ENCODE measurements at regions of chr22 and their contacts with region 1.

Region 1: GRCh38 chr22:46762238-46763050 is at the start of gene TBC1D22A:
- DNase-seq: peak; percentile 91
- H3K4me3 Mint-ChIP-seq: peak within 1 kb of the TSS; percentile 97
- H3K27ac Mint-ChIP-seq: peak within 1 kb of the TSS; percentile 98
- H3K4me1 Mint-ChIP-seq: peaks cover 59% of the 10 kb centered on the region
- H3K27me3 Mint-ChIP-seq: no peaks in the 10 kb centered on the region
- total RNA-seq, gene TBC1D22A: 42.4 and 48.1 TPM in 2 replicates

Region 2: GRCh38 chr22:46693634-46694415 is 68.6 kb before region 1 on chr22:
- intact Hi-C with region 1: no loop called
- DNase-seq: no peak
- H3K4me3 Mint-ChIP-seq: no peak overlapping the region
- H3K27ac Mint-ChIP-seq: no peak overlapping the region
- H3K4me1 Mint-ChIP-seq: no peaks in the 10 kb centered on the region
- H3K27me3 Mint-ChIP-seq: no peaks in the 10 kb centered on the region

Region 3: GRCh38 chr22:46737976-46738646 is 24.3 kb before region 1 on chr22 and contains the start of gene CERK:
- intact Hi-C with region 1: loop called (anchors 1 kb)
- DNase-seq: peak; percentile 68
- H3K4me3 Mint-ChIP-seq: peak within 1 kb of the TSS; percentile 99
- H3K27ac Mint-ChIP-seq: peak within 1 kb of the TSS; percentile 97
- H3K4me1 Mint-ChIP-seq: peaks cover 46% of the 10 kb centered on the region
- H3K27me3 Mint-ChIP-seq: no peaks in the 10 kb centered on the region
- total RNA-seq, gene CERK: 69.6 and 76.5 TPM in 2 replicates

Region 4: GRCh38 chr22:46774253-46774979 is 12.0 kb after region 1 on chr22:
- intact Hi-C with region 1: loop called (anchors 1 kb)
- DNase-seq: no peak
- H3K4me3 Mint-ChIP-seq: peak overlapping the region; percentile 78
- H3K27ac Mint-ChIP-seq: peak overlapping the region; percentile 86
- H3K4me1 Mint-ChIP-seq: peaks cover 70% of the 10 kb centered on the region
- H3K27me3 Mint-ChIP-seq: no peaks in the 10 kb centered on the region

Region 5: DNA sequence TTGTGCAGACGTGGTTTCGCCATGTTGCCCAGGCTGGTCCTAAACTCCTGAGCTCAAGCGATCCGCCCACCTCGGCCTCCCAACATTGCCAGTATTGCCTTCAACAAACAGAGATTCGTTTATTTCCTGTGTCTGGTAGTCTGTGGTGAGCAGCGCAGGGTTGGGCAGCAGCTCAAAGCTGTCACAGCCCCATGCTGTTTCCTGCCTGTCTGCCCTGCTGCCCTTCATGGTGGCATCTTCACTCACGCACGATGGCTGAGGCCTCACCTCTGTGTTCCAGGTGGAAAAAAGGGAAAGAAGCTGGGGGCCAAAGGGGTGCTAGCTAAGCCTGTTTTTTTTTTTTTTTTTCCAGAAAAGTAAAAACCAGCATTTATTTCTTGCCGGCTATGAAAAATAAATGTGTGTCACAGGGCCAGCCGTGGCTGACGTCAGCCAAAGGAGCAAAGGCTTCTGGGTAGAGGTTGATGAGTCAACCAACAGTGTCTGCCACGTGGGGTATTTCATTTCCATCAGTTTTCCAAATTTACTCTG is 28.8 kb after region 1 on chr22:
- intact Hi-C with region 1: loop called (anchors 1 kb)
- DNase-seq: peak; percentile 71
- H3K4me3 Mint-ChIP-seq: peak overlapping the region; percentile 78
- H3K27ac Mint-ChIP-seq: peak overlapping the region; percentile 99
- H3K4me1 Mint-ChIP-seq: peaks cover 49% of the 10 kb centered on the region
- H3K27me3 Mint-ChIP-seq: no peaks in the 10 kb centered on the region

Region 6: GRCh38 chr22:46798366-46799350 is 36.2 kb after region 1 on chr22:
- intact Hi-C with region 1: loop called (anchors 1 kb)
- DNase-seq: peak; percentile 65
- H3K4me3 Mint-ChIP-seq: no peak overlapping the region
- H3K27ac Mint-ChIP-seq: peak overlapping the region; percentile 82
- H3K4me1 Mint-ChIP-seq: peaks cover 21% of the 10 kb centered on the region
- H3K27me3 Mint-ChIP-seq: no peaks in the 10 kb centered on the region

Region 7: DNA sequence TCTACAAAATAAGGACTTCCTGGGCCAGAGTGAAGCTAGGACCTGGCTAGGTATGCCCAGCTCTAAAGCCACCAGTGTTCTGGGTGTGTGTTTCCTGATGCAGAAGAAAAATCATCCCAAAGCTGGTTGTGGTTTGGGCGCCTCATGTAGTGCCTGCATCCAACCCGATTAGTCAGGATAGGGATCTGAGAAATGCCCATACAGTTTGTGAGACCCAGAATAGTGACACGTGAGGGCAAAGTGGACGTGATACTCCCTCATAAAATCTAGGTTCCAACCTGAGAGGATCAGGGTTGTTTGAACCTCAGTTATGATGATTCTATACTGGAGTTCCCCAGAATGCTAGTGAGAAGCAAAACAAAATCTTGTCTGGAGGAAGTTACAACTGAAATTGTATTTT is 238.4 kb after region 1 on chr22:
- intact Hi-C with region 1: loop called (anchors 2 kb)
- DNase-seq: no peak
- H3K4me3 Mint-ChIP-seq: no peak overlapping the region
- H3K27ac Mint-ChIP-seq: peak overlapping the region; percentile 36
- H3K4me1 Mint-ChIP-seq: peaks cover 15% of the 10 kb centered on the region
- H3K27me3 Mint-ChIP-seq: no peaks in the 10 kb centered on the region